Spleen (tissue), 13 donors: ENCODE measurements at regions of chr2 and their contacts with region 1.

Region 1: DNA sequence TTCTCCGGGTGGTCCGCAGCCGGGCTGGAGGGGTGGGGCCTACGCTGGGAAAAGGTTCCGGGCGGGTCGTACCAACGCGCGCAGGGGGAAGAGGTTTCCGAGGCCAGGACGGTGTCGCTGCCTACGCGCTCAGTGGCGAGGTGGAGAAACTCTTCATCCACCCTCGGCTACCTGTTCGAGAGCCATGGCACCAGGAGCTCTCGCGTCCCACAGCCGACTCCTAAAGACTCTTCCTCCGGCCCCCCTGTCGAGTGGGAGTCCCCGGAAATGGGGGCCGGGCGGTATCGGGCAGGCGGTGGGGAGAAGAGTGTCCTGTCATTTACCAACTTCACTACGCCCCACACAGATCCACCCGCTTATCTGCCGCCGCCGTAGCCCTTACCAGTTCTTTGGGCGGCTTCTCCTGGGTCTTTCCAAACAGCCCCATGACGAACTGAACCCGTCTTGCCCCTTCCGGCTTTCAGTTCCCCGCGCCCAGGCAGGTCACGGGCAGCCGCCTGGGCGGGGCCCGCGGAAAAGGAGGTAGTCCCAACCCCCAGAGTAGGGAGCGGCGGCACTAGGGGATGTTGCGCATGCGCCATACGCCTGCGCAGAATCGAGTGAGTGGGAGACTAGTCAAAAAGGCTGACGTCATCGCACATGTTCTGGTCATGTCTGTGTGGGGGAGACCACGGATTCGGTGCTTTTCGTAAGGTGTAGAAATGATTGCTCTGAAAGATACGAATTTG is at the start of gene CHMP3:
- DNase-seq: peak; percentile 99
- H3K4me3 ChIP-seq: peak within 1 kb of the TSS; percentile 57 to 81 (median 59)
- H3K27ac ChIP-seq: peak within 1 kb of the TSS; percentile 99 to 100 (median 100)
- H3K4me1 ChIP-seq: peaks cover 12 to 49% (median 32%) of the 10 kb centered on the region in 6 donors
- H3K27me3 ChIP-seq: no peaks in the 10 kb centered on the region
- CTCF ChIP-seq: no peak
- POLR2A ChIP-seq: peak; percentile 29 to 82 (median 61)
- total RNA-seq, gene CHMP3: 68.2 to 125 (median 90.1) TPM

Region 2: GRCh38 chr2:86440631-86441391 is 122.3 kb before region 1 on chr2 and contains the start of gene KDM3A:
- intact Hi-C with region 1: loop called (anchors 10 kb)
- DNase-seq: peak; percentile 100
- H3K4me3 ChIP-seq: peak within 1 kb of the TSS; percentile 51 to 92 (median 74)
- H3K27ac ChIP-seq: peak within 1 kb of the TSS; percentile 92 to 99 (median 97)
- H3K4me1 ChIP-seq: peaks cover 17 to 38% (median 34%) of the 10 kb centered on the region in 6 donors
- H3K27me3 ChIP-seq: no peaks in the 10 kb centered on the region
- CTCF ChIP-seq: peak in 3 of 11 experiments; percentile 22 to 28 (median 26)
- POLR2A ChIP-seq: no peak
- total RNA-seq, gene KDM3A: 40.8 to 87.5 (median 51.0) TPM

Region 3: DNA sequence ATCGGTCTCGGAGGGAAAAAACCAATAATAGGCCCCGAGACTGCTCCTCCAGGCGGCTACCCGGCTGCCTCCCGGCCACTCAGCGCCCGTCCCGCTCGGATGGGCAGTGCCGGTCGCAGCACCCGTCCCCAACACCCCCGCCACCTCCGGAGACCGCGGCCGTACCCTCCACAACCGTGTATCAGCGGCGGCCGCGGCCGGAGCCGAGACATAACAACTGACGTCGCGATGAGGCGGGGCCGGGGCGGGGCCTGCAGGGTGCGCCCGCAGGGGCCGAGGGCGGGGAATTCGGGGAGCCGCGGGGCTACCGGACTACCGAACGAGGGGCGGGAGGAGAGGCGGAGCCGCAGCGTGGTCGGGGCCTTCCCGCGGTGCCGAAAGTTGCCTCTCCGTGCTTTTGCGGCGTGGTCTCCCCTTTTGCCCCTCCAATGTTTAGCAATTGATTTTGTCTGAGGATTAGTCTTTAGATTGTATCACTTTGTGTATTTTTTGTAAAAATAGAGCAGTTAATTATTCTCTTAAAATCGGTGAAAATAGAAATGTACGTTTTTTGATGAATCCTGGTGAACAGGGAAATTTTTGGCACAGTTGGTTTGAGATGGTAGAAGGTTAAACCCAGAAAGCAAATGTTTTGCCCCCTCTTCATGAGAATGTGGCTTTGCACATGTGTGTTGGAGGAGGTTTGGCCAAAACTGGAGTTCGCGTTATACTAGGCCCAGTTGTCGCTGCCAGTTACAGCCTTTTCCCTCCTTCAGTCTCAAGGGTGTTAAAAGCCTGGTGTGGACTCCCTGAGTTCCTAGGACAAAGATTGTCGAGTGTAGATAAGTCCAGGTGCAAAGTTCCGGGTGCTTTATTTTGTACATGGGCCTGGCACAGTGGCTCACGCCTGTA is 60.8 kb after region 1 on chr2 and contains the start of gene RNF103:
- intact Hi-C with region 1: loop called (anchors 5 kb)
- DNase-seq: peak; percentile 100
- H3K4me3 ChIP-seq: peak within 1 kb of the TSS; percentile 64 to 82 (median 68)
- H3K27ac ChIP-seq: peak within 1 kb of the TSS; percentile 98 to 100 (median 100)
- H3K4me1 ChIP-seq: peaks cover 14 to 46% (median 34%) of the 10 kb centered on the region in 6 donors
- H3K27me3 ChIP-seq: no peaks in the 10 kb centered on the region
- CTCF ChIP-seq: peak in 7 of 11 experiments; percentile 6 to 43 (median 19)
- POLR2A ChIP-seq: peak; percentile 87 to 97 (median 94)
- total RNA-seq, gene RNF103: 18.3 to 34.7 (median 28.3) TPM